ENCODE measurements at regions of chr17 and their contacts with region 1.

Region 1: DNA sequence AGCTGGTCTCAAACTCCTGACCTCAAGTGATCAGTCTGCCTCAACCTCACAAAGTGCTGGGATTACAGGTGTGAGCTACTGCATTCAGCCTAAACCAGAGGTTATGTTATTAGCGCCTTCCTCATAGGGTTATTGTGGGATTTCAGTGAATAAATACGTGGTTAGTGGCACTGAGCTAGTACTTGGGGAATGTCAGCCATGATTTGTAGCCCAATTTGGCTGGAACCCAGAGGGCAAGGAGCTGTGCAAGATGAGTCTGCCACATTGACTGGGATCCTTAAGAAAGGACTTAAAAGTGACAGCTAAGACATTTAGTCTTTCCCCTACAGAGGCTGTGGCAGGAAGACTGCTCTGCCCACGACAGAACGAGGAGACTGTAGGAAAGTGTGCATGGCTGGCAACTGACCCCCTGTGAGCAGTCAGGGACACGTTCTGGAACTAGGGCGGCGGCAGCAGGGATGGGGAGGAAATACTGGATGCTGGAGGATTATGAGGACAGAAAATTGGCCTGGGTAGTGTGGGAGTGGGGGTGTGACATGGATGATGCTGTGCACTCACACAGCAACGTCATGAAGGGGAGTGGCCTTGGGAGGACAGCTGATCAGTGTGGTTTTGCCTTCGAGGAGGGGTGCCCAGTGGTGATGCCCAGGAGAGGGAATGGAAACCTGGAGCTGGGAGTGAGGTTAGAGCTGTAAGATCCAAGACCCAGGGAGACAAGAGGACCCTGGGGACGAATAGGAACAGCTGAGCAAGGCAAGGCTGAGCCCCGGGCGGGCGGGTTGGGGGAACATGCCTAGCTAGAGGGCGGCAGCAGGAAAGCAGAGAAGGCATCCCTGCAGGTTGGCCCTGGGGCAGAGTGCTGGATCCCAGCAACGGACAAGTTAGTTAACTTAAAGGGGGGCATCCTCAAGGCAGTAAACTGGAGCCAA is 14.5 kb downstream of the ATP5PD start:
- DNase-seq: peak; percentile 72 to 86 (median 79)
- H3K4me3 ChIP-seq: peak overlapping the region; percentile 11 to 95 (median 91)
- H3K27ac ChIP-seq: no peak overlapping the region
- H3K4me1 ChIP-seq: peaks cover 4 to 43% (median 36%) of the 10 kb centered on the region in 4 experiments
- H3K27me3 ChIP-seq: no peaks in the 10 kb centered on the region

Region 2: DNA sequence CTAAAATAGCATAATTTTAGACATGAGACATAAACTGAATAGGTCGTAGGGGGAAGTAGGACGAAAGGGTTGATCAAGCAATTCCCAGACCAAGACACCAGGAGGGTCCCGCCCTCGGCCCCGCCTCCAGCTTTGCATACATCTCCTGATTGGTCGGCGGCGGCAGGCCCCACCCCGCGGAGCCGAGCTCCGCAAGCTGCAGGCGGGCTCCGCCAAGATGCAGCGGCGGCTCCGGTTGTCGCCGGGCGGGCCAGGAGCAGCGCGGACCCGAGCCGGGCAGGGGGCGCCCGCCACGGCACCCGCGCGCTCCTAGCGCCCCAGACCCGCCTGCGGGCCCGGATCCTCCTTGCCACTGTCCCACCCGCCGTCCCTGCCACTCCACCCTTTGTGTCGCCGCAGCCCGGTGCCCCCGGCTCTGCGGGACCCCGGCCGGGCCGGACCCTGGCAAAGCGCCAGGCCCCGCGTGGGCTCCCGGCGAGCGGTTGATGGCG is 44.8 kb before region 1 on chr17 and contains the start of gene CDR2L:
- CTCF ChIA-PET with region 1: interaction called, 10 read pairs
- POLR2A ChIA-PET with region 1: no interaction called
- DNase-seq: peak; percentile 92 to 94 (median 93)
- H3K4me3 ChIP-seq: peak within 1 kb of the TSS; percentile 49 to 83 (median 62)
- H3K27ac ChIP-seq: no peak within 1 kb of the TSS
- H3K4me1 ChIP-seq: peaks cover 0 to 23% (median 22%) of the 10 kb centered on the region in 4 experiments
- H3K27me3 ChIP-seq: peaks cover 0 to 28% (median 7%) of the 10 kb centered on the region in 5 experiments

Region 3: GRCh38 chr17:75077496-75078283 is 45.5 kb after region 1 on chr17:
- CTCF ChIA-PET with region 1: no interaction called
- POLR2A ChIA-PET with region 1: no interaction called
- DNase-seq: peak; percentile 47 to 82 (median 72)
- H3K4me3 ChIP-seq: peak overlapping the region in 6 of 7 experiments; percentile 19 to 75 (median 59)
- H3K27ac ChIP-seq: no peak overlapping the region
- H3K4me1 ChIP-seq: peaks cover 0 to 20% (median 9%) of the 10 kb centered on the region in 4 experiments
- H3K27me3 ChIP-seq: no peaks in the 10 kb centered on the region

Region 4: GRCh38 chr17:75087558-75088453 is 55.6 kb after region 1 on chr17 and contains the start of gene SLC16A5:
- CTCF ChIA-PET with region 1: no interaction called
- POLR2A ChIA-PET with region 1: no interaction called
- DNase-seq: peak in 2 of 3 donors; percentile 42 to 52
- H3K4me3 ChIP-seq: peak within 1 kb of the TSS; percentile 7 to 87 (median 75)
- H3K27ac ChIP-seq: peak within 1 kb of the TSS in 1 of 2 experiments; percentile 67
- H3K4me1 ChIP-seq: peaks cover 0 to 54% (median 29%) of the 10 kb centered on the region in 4 experiments
- H3K27me3 ChIP-seq: no peaks in the 10 kb centered on the region